B cell (primary cell): ENCODE measurements at regions of chr5 and their contacts with region 1.

Region 1: GRCh38 chr5:177390363-177391300 is 6.4 kb downstream of the SLC34A1 start:
- DNase-seq: peak; percentile 90
- ATAC-seq: peak; percentile 93
- H3K4me3 ChIP-seq: no peak overlapping the region
- H3K4me3 Mint-ChIP-seq: no peak overlapping the region
- H3K27ac ChIP-seq: no peak overlapping the region
- H3K27ac Mint-ChIP-seq: peak overlapping the region; percentile 7
- H3K4me1 ChIP-seq: peaks cover 14 to 24% of the 10 kb centered on the region in 2 donors
- H3K4me1 Mint-ChIP-seq: peaks cover 27% of the 10 kb centered on the region
- H3K27me3 ChIP-seq: peaks cover 0 to 5% (median 0%) of the 10 kb centered on the region in 4 experiments
- H3K27me3 Mint-ChIP-seq: peaks cover 3% of the 10 kb centered on the region
- CTCF ChIP-seq: peak; percentile 94

Region 2: DNA sequence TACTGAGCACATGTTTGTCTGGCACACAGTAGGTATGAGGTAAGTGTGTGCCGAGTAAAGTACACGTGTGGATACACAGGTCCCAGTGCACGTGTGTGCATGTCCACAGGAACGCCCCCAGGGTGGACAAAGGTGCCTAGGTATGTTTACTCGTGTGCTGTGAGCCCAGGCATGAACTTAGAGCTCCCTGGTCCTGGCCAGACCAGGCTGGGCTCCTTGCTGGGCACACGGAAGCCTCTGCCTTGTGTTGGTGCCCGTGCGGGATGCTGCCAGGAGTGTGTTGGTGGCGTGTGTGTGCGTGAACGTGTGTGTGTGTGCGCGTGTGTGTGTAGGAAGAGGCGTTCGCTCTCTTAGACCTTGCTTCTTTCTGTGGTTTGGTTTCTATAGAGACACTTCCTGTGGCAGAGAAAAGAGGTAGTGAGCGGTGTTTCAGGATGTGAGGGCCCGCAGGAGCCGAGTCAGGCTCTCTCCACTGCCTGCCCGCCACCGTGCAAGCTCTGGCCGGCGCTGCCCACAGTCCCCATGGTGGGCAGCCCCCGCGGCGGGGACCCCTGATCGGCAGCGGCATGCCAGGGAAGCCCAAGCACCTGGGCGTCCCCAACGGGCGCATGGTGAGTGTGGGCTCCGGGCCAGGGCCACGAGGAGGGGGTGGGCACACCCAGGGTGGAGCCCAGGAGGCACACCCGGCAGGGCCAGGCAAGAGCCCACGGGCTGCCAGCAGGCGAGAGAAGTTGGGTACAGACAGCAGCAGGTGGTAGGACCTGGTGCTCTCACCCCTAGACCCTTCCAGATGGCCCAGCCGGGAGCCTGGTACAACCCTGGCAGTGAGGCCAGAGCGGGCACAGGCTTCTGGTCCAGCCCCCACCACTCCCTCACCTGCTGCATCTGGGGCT is 32.9 kb before region 1 on chr5 and contains the start of gene RGS14:
- CTCF ChIA-PET with region 1: interaction called, 4 read pairs
- POLR2A ChIA-PET with region 1: no interaction called
- intact Hi-C with region 1: loop called (anchors 2 kb)
- DNase-seq: peak; percentile 90
- ATAC-seq: peak; percentile 88
- H3K4me3 ChIP-seq: peak within 1 kb of the TSS; percentile 74 to 96 (median 92)
- H3K4me3 Mint-ChIP-seq: peak within 1 kb of the TSS; percentile 87
- H3K27ac ChIP-seq: peak within 1 kb of the TSS; percentile 62 to 80
- H3K27ac Mint-ChIP-seq: peak within 1 kb of the TSS; percentile 95
- H3K4me1 ChIP-seq: peaks cover 56 to 63% of the 10 kb centered on the region in 2 donors
- H3K4me1 Mint-ChIP-seq: peaks cover 76% of the 10 kb centered on the region
- H3K27me3 ChIP-seq: no peaks in the 10 kb centered on the region
- H3K27me3 Mint-ChIP-seq: no peaks in the 10 kb centered on the region
- CTCF ChIP-seq: no peak
- total RNA-seq, gene RGS14: 85.8 and 92.6 TPM in 2 replicates

Region 3: DNA sequence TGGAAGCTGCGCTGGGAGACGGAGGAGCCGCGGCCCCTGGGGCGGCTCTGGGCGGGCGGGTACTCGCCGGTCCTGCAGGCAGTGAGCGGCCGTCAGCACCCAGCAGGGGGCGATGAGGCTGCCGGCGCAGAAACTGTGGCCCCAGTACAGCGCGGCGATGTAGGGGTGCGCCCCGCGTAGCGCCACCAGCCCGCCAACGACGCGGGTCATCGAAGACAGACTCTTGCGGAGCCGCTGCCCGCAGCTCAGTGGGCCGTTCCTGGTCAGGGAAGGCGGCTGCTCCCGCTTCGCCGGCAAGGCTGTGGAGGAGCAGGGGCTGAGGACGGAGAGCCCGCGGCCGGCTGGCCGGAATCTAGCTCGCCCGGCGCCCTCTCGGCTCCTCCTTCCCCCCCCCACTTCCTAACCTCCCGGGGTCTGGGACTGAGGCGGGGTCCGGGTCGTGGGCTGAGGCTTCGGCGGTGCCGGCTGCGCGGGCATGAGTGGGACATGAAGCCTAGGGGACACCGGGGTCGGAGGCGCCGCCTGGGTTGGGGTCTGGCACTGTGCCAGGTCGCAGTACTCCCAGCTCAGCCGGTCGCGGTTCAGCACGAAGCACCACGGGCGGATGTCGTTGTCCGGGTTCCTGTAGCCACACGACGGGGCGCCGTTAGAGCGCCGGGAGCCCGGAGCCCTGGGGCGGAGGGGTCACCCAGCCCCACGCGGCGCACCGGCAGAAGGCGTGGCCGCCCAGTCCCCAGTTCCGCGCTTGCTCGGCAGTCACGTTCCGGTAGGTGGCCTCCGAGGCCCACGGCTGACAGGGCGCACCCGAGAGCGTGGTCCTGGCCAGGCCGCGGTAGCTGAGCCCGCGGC is 13.4 kb after region 1 on chr5:
- CTCF ChIA-PET with region 1: interaction called, 146 read pairs
- POLR2A ChIA-PET with region 1: interaction called, 7 read pairs
- intact Hi-C with region 1: loop called (anchors 1 kb)
- DNase-seq: peak; percentile 91
- ATAC-seq: peak; percentile 82
- H3K4me3 ChIP-seq: peak overlapping the region; percentile 14 to 68 (median 61)
- H3K4me3 Mint-ChIP-seq: peak overlapping the region; percentile 84
- H3K27ac ChIP-seq: peak overlapping the region in 1 of 2 donors; percentile 48
- H3K27ac Mint-ChIP-seq: peak overlapping the region; percentile 32
- H3K4me1 ChIP-seq: peaks cover 38 to 50% of the 10 kb centered on the region in 2 donors
- H3K4me1 Mint-ChIP-seq: peaks cover 39% of the 10 kb centered on the region
- H3K27me3 ChIP-seq: peaks cover 0 to 37% (median 9%) of the 10 kb centered on the region in 4 experiments
- H3K27me3 Mint-ChIP-seq: peaks cover 14% of the 10 kb centered on the region
- CTCF ChIP-seq: peak; percentile 70

Region 4: DNA sequence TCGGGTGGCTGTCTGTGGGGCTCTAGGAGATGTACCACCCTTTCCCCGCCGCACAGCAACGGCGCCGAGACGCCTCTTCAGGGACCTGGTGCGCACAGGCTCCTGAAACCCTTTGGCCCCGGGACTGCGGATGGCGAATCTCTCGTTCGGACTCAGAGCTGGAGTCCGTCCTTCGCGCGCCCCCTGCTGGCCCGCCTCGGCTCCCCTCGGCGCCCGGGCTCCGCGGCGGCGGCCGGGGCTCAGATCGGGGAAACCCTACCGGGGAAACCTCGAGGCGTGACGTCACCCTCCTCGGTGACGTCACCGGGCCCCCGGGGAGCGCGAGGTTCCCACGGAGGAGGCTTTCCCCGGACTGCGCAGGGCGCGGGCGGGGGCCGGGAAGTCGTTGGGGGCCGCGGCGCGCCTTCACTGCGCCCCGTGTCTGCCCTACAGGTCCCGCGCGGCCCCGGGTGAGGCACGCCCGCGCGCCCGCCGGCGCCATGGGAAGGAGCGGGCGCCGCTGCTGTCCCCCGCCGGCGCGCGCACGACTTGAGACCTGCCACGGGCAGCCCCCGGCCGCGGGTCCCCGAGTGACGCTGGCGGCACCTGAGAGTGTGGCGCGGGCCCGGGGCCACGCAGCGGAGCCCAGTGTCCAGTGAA is 63.9 kb after region 1 on chr5:
- CTCF ChIA-PET with region 1: interaction called, 186 read pairs
- POLR2A ChIA-PET with region 1: interaction called, 17 read pairs
- intact Hi-C with region 1: loop called (anchors 1 kb)
- DNase-seq: peak; percentile 98
- ATAC-seq: peak; percentile 53
- H3K4me3 ChIP-seq: peak overlapping the region; percentile 13 to 91 (median 74)
- H3K4me3 Mint-ChIP-seq: peak overlapping the region; percentile 96
- H3K27ac ChIP-seq: peak overlapping the region; percentile 88 to 97
- H3K27ac Mint-ChIP-seq: peak overlapping the region; percentile 97
- H3K4me1 ChIP-seq: peaks cover 17 to 32% of the 10 kb centered on the region in 2 donors
- H3K4me1 Mint-ChIP-seq: peaks cover 27% of the 10 kb centered on the region
- H3K27me3 ChIP-seq: peaks cover 0 to 7% (median 0%) of the 10 kb centered on the region in 4 experiments
- H3K27me3 Mint-ChIP-seq: no peaks in the 10 kb centered on the region
- CTCF ChIP-seq: peak; percentile 81

Region 5: GRCh38 chr5:177578331-177578730 is 187.7 kb after region 1 on chr5:
- CTCF ChIA-PET with region 1: no interaction called
- POLR2A ChIA-PET with region 1: interaction called, 10 read pairs
- intact Hi-C with region 1: no loop called
- DNase-seq: no peak
- ATAC-seq: no peak
- H3K4me3 ChIP-seq: no peak overlapping the region
- H3K4me3 Mint-ChIP-seq: no peak overlapping the region
- H3K27ac ChIP-seq: no peak overlapping the region
- H3K27ac Mint-ChIP-seq: no peak overlapping the region
- H3K4me1 ChIP-seq: no peaks in the 10 kb centered on the region
- H3K4me1 Mint-ChIP-seq: no peaks in the 10 kb centered on the region
- H3K27me3 ChIP-seq: peaks cover 0 to 8% (median 3%) of the 10 kb centered on the region in 4 experiments
- H3K27me3 Mint-ChIP-seq: peaks cover 13% of the 10 kb centered on the region
- CTCF ChIP-seq: no peak